Natural killer cell (primary cell): ENCODE measurements at regions of chr22 and their contacts with region 1.

Region 1: DNA sequence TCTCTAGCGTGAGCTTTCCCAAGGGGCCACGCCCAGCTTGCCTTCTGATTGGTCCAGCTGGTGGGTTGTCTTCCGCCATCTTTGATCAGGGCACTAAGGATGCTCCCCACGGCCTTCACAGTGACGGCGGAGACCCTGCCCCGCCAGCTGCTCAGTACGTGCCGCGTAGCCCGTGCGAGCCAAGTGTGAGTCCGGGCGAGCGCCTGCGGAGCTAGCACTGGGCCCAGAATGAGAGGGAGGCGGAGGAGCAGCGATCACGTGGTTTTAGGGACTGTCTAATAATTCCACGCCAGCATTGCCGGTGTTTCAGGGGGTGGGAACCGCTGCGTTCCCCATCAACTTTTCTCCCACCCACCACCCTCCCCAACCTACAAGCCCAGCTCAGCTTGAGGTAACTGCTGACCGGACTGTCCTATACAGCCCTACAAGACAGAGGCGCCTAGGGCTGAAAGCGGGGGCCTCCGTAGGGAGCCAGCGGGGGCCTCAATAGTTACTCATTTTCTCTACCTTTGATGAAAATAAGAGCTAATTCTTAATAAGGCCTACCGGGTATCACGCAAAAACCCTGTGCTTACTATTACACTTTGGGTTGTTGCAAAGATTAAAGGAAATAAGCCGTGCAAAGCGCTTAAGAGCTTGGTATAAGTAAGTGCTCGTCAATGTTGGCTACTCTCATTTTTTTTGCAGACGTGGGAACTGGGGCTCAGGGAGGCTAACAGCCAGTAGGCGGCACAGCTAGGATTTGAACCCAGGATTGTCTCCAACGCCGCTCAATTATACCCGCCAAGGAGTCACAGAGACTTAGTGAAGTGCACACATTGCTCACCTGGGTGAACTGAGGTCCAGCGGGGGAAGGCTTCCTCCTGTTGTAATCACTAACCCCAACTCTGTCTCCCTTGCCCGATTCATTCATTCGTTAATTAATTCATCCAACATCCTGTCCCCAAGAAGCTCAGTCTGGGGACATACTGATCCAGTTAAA is 1.3 kb upstream of the MTFP1 start:
- DNase-seq: peak; percentile 93 to 100
- ATAC-seq: peak; percentile 85 to 95 (median 88)
- H3K4me3 ChIP-seq: peak overlapping the region; percentile 79
- H3K4me3 Mint-ChIP-seq: peak overlapping the region; percentile 95
- H3K27ac ChIP-seq: peak overlapping the region; percentile 90
- H3K27ac Mint-ChIP-seq: peak overlapping the region; percentile 93 to 94
- H3K4me1 ChIP-seq: peaks cover 46% of the 10 kb centered on the region
- H3K4me1 Mint-ChIP-seq: peaks cover 41 to 55% of the 10 kb centered on the region in 2 donors
- H3K27me3 ChIP-seq: no peaks in the 10 kb centered on the region
- H3K27me3 Mint-ChIP-seq: no peaks in the 10 kb centered on the region
- CTCF ChIP-seq: no peak

Region 2: GRCh38 chr22:30356449-30357235 is 67.6 kb before region 1 on chr22 and contains the starts of genes CCDC157 and SF3A1:
- intact Hi-C with region 1: loop called (anchors 2 kb)
- DNase-seq: peak; percentile 89 to 95
- ATAC-seq: peak; percentile 84 to 94 (median 84)
- H3K4me3 ChIP-seq: peak within 1 kb of the TSS; percentile 96
- H3K4me3 Mint-ChIP-seq: peak within 1 kb of the TSS; percentile 97
- H3K27ac ChIP-seq: peak within 1 kb of the TSS; percentile 88
- H3K27ac Mint-ChIP-seq: peak within 1 kb of the TSS; percentile 89 to 92
- H3K4me1 ChIP-seq: peaks cover 50% of the 10 kb centered on the region
- H3K4me1 Mint-ChIP-seq: peaks cover 59% of the 10 kb centered on the region in 2 donors
- H3K27me3 ChIP-seq: no peaks in the 10 kb centered on the region
- H3K27me3 Mint-ChIP-seq: peaks cover 0 to 3% of the 10 kb centered on the region in 2 donors
- CTCF ChIP-seq: no peak
- total RNA-seq, gene CCDC157: 7.7 to 9.7 (median 8.4) TPM
- total RNA-seq, gene SF3A1: 309 to 340 (median 319) TPM

Region 3: DNA sequence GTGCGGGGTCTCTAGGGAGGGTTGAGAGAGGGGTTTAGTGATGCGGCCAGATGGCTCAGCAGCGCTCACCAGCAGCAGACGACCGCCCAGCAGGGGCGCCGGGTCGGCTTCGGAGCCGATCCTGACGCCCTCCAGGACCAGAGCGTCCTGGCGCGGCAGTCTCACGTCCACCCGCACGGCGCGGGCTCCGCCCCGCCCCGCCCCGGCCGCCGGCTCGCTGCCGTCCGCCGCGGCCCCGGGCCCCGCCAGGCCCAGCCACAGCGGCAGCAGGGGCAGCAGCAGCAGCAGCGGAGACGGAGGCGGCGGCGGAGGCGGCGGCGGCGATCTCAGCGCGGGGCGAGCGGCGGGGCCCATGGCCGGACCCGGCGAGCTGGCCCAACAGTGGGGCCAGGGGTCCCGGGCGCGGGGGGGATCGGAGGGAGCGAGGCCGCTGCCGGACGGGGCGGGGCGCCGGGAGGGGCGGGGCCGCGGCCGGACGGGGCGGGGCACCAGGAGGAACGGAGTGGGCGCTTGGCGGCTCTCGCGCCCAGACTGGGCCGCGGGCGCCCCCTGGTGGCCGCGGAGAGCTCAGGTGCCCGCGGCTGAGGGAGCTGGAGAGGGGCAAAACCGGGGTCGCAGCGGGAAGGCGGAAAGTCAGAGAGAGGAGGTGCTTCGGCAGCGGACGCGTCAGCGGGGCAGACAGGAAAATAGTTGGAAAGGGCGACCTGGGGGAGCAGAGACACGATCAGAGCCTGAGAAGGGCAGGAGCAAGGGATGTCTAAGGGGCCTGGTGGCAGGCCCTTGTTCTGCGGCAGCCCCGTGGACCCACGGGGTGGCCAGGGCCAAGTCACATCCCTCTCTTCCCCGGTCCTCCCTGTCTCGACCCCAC is 37.1 kb before region 1 on chr22 and contains the start of gene RNF215:
- intact Hi-C with region 1: loop called (anchors 1 kb)
- DNase-seq: peak; percentile 87 to 90
- ATAC-seq: peak; percentile 94 to 97 (median 95)
- H3K4me3 ChIP-seq: peak within 1 kb of the TSS; percentile 9
- H3K4me3 Mint-ChIP-seq: peak within 1 kb of the TSS; percentile 52
- H3K27ac ChIP-seq: no peak within 1 kb of the TSS
- H3K27ac Mint-ChIP-seq: peak within 1 kb of the TSS in 1 of 2 donors; percentile 76
- H3K4me1 ChIP-seq: peaks cover 12% of the 10 kb centered on the region
- H3K4me1 Mint-ChIP-seq: peaks cover 5 to 6% of the 10 kb centered on the region in 2 donors
- H3K27me3 ChIP-seq: no peaks in the 10 kb centered on the region
- H3K27me3 Mint-ChIP-seq: peaks cover 0 to 5% of the 10 kb centered on the region in 2 donors
- CTCF ChIP-seq: peak; percentile 89
- total RNA-seq, gene RNF215: 7.5 to 9.8 (median 9.5) TPM

Region 4: DNA sequence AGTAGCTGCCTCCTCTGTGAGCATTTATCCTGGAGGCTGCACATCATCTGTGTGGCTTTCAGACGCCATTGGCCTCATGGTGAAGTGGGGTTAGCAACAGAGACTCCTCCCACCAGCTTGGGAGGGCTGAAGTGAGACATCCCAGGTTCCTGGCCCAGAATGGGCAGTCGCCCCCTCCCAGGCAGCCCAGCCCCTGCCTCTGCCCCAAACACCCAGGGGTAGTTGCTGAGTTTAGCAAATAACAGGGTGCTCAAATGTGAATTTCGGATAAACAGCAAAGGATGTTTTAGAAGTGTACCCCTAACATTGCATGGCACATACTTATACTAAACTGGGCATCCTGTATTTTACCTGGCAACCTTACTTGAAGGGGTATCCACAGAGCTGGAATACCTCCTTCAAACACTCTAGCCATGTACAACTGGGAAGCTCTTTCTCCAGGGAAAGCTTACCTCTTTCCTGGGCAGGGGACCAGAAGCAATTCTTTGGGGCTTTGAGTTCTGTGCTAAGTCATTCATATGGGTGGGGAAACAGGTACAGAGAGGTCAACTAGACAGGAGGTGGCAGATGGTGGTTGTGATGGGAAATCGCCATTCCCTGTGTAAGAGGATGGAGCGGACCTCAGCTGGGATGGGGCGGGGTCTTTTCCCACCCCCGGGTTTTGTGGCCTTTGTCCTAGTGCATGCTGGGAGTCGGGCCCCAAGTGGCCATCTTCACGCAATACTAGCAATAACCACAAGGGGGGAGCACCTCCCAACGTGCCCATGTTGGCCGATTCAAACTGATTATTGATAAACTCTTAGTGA is 20.6 kb after region 1 on chr22:
- intact Hi-C with region 1: loop called (anchors 1 kb)
- DNase-seq: peak in 1 of 2 donors; percentile 76
- ATAC-seq: peak in 1 of 3 donors; percentile 50
- H3K4me3 ChIP-seq: no peak overlapping the region
- H3K4me3 Mint-ChIP-seq: no peak overlapping the region
- H3K27ac ChIP-seq: no peak overlapping the region
- H3K27ac Mint-ChIP-seq: no peak overlapping the region
- H3K4me1 ChIP-seq: peaks cover 18% of the 10 kb centered on the region
- H3K4me1 Mint-ChIP-seq: peaks cover 17 to 25% of the 10 kb centered on the region in 2 donors
- H3K27me3 ChIP-seq: peaks cover 3% of the 10 kb centered on the region
- H3K27me3 Mint-ChIP-seq: peaks cover 36 to 46% of the 10 kb centered on the region in 2 donors
- CTCF ChIP-seq: peak; percentile 69

Region 5: GRCh38 chr22:30562366-30562765 is 138.1 kb after region 1 on chr22:
- intact Hi-C with region 1: no loop called
- DNase-seq: no peak
- ATAC-seq: no peak
- H3K4me3 ChIP-seq: no peak overlapping the region
- H3K4me3 Mint-ChIP-seq: no peak overlapping the region
- H3K27ac ChIP-seq: no peak overlapping the region
- H3K27ac Mint-ChIP-seq: no peak overlapping the region
- H3K4me1 ChIP-seq: no peaks in the 10 kb centered on the region
- H3K4me1 Mint-ChIP-seq: no peaks in the 10 kb centered on the region
- H3K27me3 ChIP-seq: no peaks in the 10 kb centered on the region
- H3K27me3 Mint-ChIP-seq: no peaks in the 10 kb centered on the region
- CTCF ChIP-seq: no peak